B cell (primary cell): ENCODE measurements at regions of chr15 and their contacts with region 1.

Region 1: GRCh38 chr15:99076552-99077308 is 28.1 kb upstream of the SYNM start:
- DNase-seq: peak; percentile 74
- ATAC-seq: peak; percentile 79
- H3K4me3 ChIP-seq: peak overlapping the region; percentile 30 to 69 (median 45)
- H3K4me3 Mint-ChIP-seq: peak overlapping the region; percentile 86
- H3K27ac ChIP-seq: no peak overlapping the region
- H3K27ac Mint-ChIP-seq: peak overlapping the region; percentile 46
- H3K4me1 ChIP-seq: peaks cover 5 to 7% of the 10 kb centered on the region in 2 donors
- H3K4me1 Mint-ChIP-seq: peaks cover 7% of the 10 kb centered on the region
- H3K27me3 ChIP-seq: peaks cover 0 to 4% (median under 1%) of the 10 kb centered on the region in 4 experiments
- H3K27me3 Mint-ChIP-seq: peaks cover 23% of the 10 kb centered on the region
- CTCF ChIP-seq: peak; percentile 93

Region 2: DNA sequence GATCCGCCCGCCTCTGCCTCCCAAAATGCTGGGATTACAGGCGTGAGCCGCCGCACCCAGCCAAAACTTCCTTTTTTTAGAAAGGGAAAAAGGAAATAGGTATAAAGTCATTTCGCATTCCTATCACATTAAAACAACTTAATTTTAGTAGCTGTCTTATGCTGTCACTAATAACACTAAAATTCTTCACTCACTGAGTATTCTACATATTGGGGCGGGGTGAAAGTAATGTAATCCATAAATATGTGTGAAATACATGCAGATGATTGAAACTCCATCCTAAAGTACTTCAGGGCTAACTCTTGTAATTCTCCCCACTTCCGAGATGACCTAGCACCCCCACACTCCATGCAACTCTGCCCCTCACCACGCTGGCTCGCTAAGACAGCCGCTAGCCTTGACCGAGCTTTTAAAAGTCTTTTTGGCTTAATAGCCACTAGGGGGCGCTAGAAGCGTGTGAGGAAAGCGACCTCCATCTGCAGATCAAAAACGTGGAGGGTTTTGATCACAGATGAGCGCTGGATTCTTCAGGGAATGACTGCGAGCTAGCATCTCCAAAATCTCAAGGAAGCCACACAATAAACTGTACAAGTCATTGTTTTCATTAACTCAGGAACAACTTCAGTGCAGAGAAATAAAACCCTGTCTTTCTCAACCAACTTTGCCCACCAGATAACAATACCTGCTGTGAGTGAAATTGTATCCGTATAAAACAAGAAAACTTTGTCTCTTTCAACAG is 557.7 kb before region 1 on chr15:
- CTCF ChIA-PET with region 1: interaction called, 16 read pairs
- POLR2A ChIA-PET with region 1: no interaction called
- intact Hi-C with region 1: loop called (anchors 1 kb)
- DNase-seq: peak; percentile 80
- ATAC-seq: peak; percentile 63
- H3K4me3 ChIP-seq: no peak overlapping the region
- H3K4me3 Mint-ChIP-seq: no peak overlapping the region
- H3K27ac ChIP-seq: no peak overlapping the region
- H3K27ac Mint-ChIP-seq: no peak overlapping the region
- H3K4me1 ChIP-seq: peaks cover 0 to 3% of the 10 kb centered on the region in 2 donors
- H3K4me1 Mint-ChIP-seq: peaks cover 2% of the 10 kb centered on the region
- H3K27me3 ChIP-seq: no peaks in the 10 kb centered on the region
- H3K27me3 Mint-ChIP-seq: peaks cover 10% of the 10 kb centered on the region
- CTCF ChIP-seq: peak; percentile 81

Region 3: DNA sequence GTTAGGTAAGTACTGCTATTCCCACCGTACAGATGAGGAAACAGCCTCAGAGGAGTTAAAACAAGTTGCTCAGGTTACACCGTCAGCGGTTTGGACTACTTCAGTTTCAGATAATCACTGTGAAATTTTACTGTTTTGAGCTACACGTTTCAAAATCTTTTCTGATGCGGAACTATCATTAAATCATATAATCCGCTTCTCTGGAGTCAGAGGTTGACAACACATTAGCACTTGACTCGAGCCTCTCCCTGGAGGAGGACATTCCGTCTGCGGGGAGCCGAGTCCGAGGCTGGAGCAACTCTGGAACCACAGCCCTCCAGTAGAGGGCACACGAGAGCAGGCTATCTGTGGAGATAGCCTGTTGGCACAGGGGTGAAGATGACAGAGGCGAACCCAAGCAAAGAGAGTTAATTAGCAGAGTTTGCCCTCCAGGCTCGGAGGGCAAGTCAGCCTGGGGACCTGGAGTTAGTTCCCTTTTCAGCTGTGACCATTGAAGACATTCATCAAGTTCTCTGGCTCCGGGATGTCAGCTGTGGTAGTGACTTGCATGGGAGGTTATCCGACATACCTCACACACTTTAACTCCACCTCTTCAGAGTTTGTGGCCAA is 297.2 kb before region 1 on chr15:
- CTCF ChIA-PET with region 1: interaction called, 4 read pairs
- POLR2A ChIA-PET with region 1: no interaction called
- intact Hi-C with region 1: loop called (anchors 2 kb)
- DNase-seq: peak; percentile 76
- ATAC-seq: peak; percentile 84
- H3K4me3 ChIP-seq: no peak overlapping the region
- H3K4me3 Mint-ChIP-seq: peak overlapping the region; percentile 24
- H3K27ac ChIP-seq: no peak overlapping the region
- H3K27ac Mint-ChIP-seq: no peak overlapping the region
- H3K4me1 ChIP-seq: peaks cover 15 to 30% of the 10 kb centered on the region in 2 donors
- H3K4me1 Mint-ChIP-seq: peaks cover 19% of the 10 kb centered on the region
- H3K27me3 ChIP-seq: no peaks in the 10 kb centered on the region
- H3K27me3 Mint-ChIP-seq: peaks cover 22% of the 10 kb centered on the region
- CTCF ChIP-seq: peak; percentile 97

Region 4: GRCh38 chr15:99090011-99090699 is 13.4 kb after region 1 on chr15:
- CTCF ChIA-PET with region 1: interaction called, 21 read pairs
- POLR2A ChIA-PET with region 1: no interaction called
- intact Hi-C with region 1: no loop called
- DNase-seq: peak; percentile 76
- ATAC-seq: peak; percentile 97
- H3K4me3 ChIP-seq: no peak overlapping the region
- H3K4me3 Mint-ChIP-seq: peak overlapping the region; percentile 6
- H3K27ac ChIP-seq: peak overlapping the region in 1 of 2 donors; percentile 61
- H3K27ac Mint-ChIP-seq: peak overlapping the region; percentile 63
- H3K4me1 ChIP-seq: peaks cover 14 to 19% of the 10 kb centered on the region in 2 donors
- H3K4me1 Mint-ChIP-seq: peaks cover 16% of the 10 kb centered on the region
- H3K27me3 ChIP-seq: no peaks in the 10 kb centered on the region
- H3K27me3 Mint-ChIP-seq: peaks cover 4% of the 10 kb centered on the region
- CTCF ChIP-seq: no peak

Region 5: GRCh38 chr15:99123706-99124451 is 47.1 kb after region 1 on chr15:
- CTCF ChIA-PET with region 1: no interaction called
- POLR2A ChIA-PET with region 1: no interaction called
- intact Hi-C with region 1: no loop called
- DNase-seq: no peak
- ATAC-seq: no peak
- H3K4me3 ChIP-seq: no peak overlapping the region
- H3K4me3 Mint-ChIP-seq: no peak overlapping the region
- H3K27ac ChIP-seq: no peak overlapping the region
- H3K27ac Mint-ChIP-seq: no peak overlapping the region
- H3K4me1 ChIP-seq: no peaks in the 10 kb centered on the region
- H3K4me1 Mint-ChIP-seq: no peaks in the 10 kb centered on the region
- H3K27me3 ChIP-seq: peaks cover 0 to 3% (median 0%) of the 10 kb centered on the region in 4 experiments
- H3K27me3 Mint-ChIP-seq: peaks cover 5% of the 10 kb centered on the region
- CTCF ChIP-seq: no peak